HepG2 (cell line): ENCODE measurements at regions of chr12 and their contacts with region 1.

Region 1: GRCh38 chr12:52884526-52885293 is 20.2 kb downstream of the KRT8 start:
- DNase-seq: peak; percentile 97
- ATAC-seq: peak; percentile 80
- H3K4me3 ChIP-seq: peak overlapping the region in 2 of 3 experiments; percentile 29 to 42; a peak in 1 of 6 replicates
- H3K27ac ChIP-seq: peak overlapping the region; percentile 86
- H3K4me1 ChIP-seq: peaks cover 60% of the 10 kb centered on the region
- H3K27me3 ChIP-seq: no peaks in the 10 kb centered on the region
- CTCF ChIP-seq: peak; percentile 96
- EP300 ChIP-seq: peak; percentile 65 to 93; a peak in 2 of 4 replicates
- POLR2A ChIP-seq: no peak; a peak in 1 of 4 replicates
- RAD21 ChIP-seq: peak; percentile 98

Region 2: GRCh38 chr12:52681526-52682380 is 203.0 kb before region 1 on chr12:
- CTCF ChIA-PET with region 1: no interaction called
- POLR2A ChIA-PET with region 1: no interaction called
- in situ Hi-C with region 1: no loop called
- intact Hi-C with region 1: no loop called
- DNase-seq: no peak
- ATAC-seq: no peak
- H3K4me3 ChIP-seq: no peak overlapping the region
- H3K27ac ChIP-seq: no peak overlapping the region
- H3K4me1 ChIP-seq: no peaks in the 10 kb centered on the region
- H3K27me3 ChIP-seq: peaks cover 2 to 34% of the 10 kb centered on the region in 2 experiments; a peak in 3 of 5 replicates
- CTCF ChIP-seq: no peak
- EP300 ChIP-seq: no peak
- POLR2A ChIP-seq: no peak
- RAD21 ChIP-seq: no peak

Region 3: GRCh38 chr12:52895061-52895887 is 10.6 kb after region 1 on chr12:
- CTCF ChIA-PET with region 1: interaction called, 5 read pairs
- POLR2A ChIA-PET with region 1: interaction called, 25 read pairs
- in situ Hi-C with region 1: no loop called
- intact Hi-C with region 1: no loop called
- DNase-seq: peak; percentile 92
- ATAC-seq: peak; percentile 71
- H3K4me3 ChIP-seq: no peak overlapping the region
- H3K27ac ChIP-seq: peak overlapping the region; percentile 36
- H3K4me1 ChIP-seq: peaks cover 46% of the 10 kb centered on the region
- H3K27me3 ChIP-seq: no peaks in the 10 kb centered on the region
- CTCF ChIP-seq: no peak
- EP300 ChIP-seq: peak in 1 of 2 experiments; percentile 80; a peak in 2 of 4 replicates
- POLR2A ChIP-seq: no peak; a peak in 2 of 4 replicates
- RAD21 ChIP-seq: no peak

Region 4: DNA sequence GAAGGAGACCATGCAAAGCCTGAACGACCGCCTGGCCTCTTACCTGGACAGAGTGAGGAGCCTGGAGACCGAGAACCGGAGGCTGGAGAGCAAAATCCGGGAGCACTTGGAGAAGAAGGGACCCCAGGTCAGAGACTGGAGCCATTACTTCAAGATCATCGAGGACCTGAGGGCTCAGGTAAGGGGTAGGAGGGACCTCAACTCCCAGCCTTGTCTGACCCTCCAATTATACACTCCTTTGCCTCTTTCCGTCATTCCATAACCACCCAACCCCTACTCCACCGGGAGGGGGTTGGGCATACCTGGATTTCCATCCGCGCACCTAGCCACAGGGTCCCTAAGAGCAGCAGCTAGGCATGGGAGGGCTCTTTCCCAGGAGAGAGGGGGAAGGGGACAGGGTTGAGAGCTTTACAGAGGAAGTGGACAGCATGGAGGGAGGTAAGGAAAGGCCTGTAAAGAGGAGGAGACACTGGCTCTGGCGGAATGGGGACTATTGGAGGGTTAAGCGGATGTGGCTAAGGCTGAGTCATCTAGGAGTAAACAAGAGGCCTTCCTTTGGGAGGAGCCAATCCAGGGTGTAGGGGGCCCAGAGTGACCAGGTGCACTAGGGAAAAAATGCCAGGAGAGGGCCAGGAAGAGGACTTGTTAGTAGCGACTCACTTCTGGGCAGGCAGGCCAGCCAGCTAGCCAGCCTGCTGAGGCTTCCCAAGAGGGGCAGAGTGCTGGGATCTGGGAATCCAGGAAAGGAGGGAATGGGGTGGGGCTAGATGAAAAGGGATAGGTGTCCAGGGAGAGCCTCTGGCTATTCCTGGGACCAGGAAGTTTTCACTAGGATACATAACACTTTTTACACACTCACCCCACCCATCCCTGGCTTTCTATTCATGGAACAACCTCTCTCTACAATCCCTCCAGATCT is 65.0 kb after region 1 on chr12:
- CTCF ChIA-PET with region 1: no interaction called
- POLR2A ChIA-PET with region 1: interaction called, 23 read pairs
- in situ Hi-C with region 1: no loop called
- intact Hi-C with region 1: no loop called
- DNase-seq: peak; percentile 98
- ATAC-seq: peak; percentile 83
- H3K4me3 ChIP-seq: peak overlapping the region; percentile 88 to 100 (median 99)
- H3K27ac ChIP-seq: peak overlapping the region; percentile 100
- H3K4me1 ChIP-seq: peaks cover 68% of the 10 kb centered on the region
- H3K27me3 ChIP-seq: peaks cover 0 to 2% of the 10 kb centered on the region in 2 experiments; a peak in 1 of 5 replicates
- CTCF ChIP-seq: peak; percentile 42; the same call in 1 of the 2 replicates
- EP300 ChIP-seq: peak in 1 of 2 experiments; percentile 90; a peak in 2 of 4 replicates
- POLR2A ChIP-seq: peak; percentile 82 to 96
- RAD21 ChIP-seq: peak; percentile 81